GM12878 (cell line): ENCODE measurements at regions of chr14 and their contacts with region 1.

Region 1: GRCh38 chr14:23068476-23069412 is 11.4 kb upstream of the CDH24 start:
- DNase-seq: peak; percentile 67
- ATAC-seq: peak; percentile 91
- H3K4me3 ChIP-seq: no peak overlapping the region
- H3K27ac ChIP-seq: no peak overlapping the region
- H3K4me1 ChIP-seq: peaks cover 11% of the 10 kb centered on the region; the same call in 1 of the 2 replicates
- H3K27me3 ChIP-seq: no peaks in the 10 kb centered on the region
- CTCF ChIP-seq: peak; percentile 97 to 100 (median 99)
- EP300 ChIP-seq: no peak
- POLR2A ChIP-seq: no peak
- RAD21 ChIP-seq: peak; percentile 62

Region 2: DNA sequence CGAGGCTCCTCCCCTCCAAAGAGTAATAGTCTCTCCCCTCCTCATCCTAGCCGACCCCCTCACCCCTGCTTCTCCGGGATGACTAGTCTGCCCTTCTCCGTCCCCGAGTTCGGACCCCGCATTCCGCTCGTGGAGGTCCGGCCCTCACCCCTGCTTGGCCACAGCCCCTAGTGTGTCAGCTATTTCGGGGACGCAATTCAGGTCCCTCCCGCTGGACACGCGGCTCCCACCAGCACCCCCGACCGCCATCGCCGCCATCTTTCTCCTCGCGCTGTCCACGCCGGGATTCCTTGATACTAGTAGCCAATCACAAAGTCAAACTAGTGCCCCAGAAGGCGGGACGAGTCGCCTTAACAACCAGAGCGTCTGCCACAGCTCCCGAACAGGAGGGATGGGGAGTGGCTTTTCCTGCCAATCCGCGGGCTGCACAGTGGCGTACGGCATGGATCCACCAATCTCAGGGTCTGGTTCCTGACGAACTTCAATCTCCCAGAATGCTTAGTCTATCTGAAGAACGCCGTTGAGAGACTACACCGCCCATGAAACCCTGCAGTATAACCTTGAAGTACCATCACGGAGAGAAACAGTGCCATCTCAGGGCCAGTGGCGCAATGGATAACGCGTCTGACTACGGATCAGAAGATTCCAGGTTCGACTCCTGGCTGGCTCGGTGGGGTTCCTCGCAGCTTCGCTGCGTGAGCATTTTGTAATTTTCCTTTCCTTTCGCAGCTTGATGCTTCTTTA is 139.5 kb before region 1 on chr14 and contains the start of gene PRMT5:
- CTCF ChIA-PET with region 1: interaction called, 12 read pairs
- POLR2A ChIA-PET with region 1: interaction called, 5 read pairs
- RAD21 ChIA-PET with region 1: interaction called, 5 read pairs
- SMC1A ChIA-PET with region 1: interaction called, 5 read pairs
- in situ Hi-C with region 1: no loop called
- intact Hi-C with region 1: no loop called
- DNase-seq: peak; percentile 100
- ATAC-seq: peak; percentile 97
- H3K4me3 ChIP-seq: peak within 1 kb of the TSS; percentile 91
- H3K27ac ChIP-seq: peak within 1 kb of the TSS; percentile 81
- H3K4me1 ChIP-seq: peaks cover 16% of the 10 kb centered on the region; the same call in 1 of the 2 replicates
- H3K27me3 ChIP-seq: no peaks in the 10 kb centered on the region
- CTCF ChIP-seq: peak in 1 of 3 experiments; percentile 7; a peak in 1 of 6 replicates
- EP300 ChIP-seq: no peak
- POLR2A ChIP-seq: peak; percentile 97
- RAD21 ChIP-seq: no peak
- polyA plus RNA-seq, gene PRMT5: 54.3 to 71.6 TPM

Region 3: DNA sequence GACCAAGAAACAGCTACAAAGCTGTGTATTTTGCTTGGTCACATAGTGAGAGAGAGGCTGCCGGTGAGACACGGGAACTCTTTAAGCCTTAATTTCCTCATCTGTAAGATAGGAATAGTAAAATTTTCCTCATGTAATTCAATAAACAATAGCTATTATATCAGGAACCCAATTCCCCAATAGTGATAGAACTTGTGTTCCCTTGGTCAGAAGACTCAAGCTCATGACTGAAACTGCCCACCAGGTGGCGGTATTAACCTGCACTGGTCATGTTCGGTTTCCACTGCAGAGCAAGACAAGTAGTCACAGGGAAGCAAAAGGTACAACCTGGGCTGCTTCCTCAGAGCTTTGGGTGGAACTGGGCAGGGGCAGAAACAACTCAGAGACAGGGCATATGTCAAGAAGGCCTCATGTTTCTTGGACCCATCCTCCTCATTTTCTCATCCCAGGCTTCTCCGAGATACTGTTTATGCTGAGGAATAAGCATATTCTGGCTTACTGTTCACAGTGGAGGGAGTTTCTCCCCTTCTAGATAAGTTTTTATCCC is 82.2 kb before region 1 on chr14:
- CTCF ChIA-PET with region 1: interaction called, 73 read pairs
- POLR2A ChIA-PET with region 1: no interaction called
- RAD21 ChIA-PET with region 1: interaction called, 27 read pairs
- SMC1A ChIA-PET with region 1: interaction called, 23 read pairs
- in situ Hi-C with region 1: no loop called
- intact Hi-C with region 1: no loop called
- DNase-seq: no peak
- ATAC-seq: peak; percentile 90
- H3K4me3 ChIP-seq: no peak overlapping the region
- H3K27ac ChIP-seq: no peak overlapping the region
- H3K4me1 ChIP-seq: no peaks in the 10 kb centered on the region; the same call in 1 of the 2 replicates
- H3K27me3 ChIP-seq: peaks cover 3% of the 10 kb centered on the region in 2 experiments
- CTCF ChIP-seq: peak; percentile 85 to 94 (median 93)
- EP300 ChIP-seq: no peak
- POLR2A ChIP-seq: no peak
- RAD21 ChIP-seq: peak; percentile 95

Region 4: DNA sequence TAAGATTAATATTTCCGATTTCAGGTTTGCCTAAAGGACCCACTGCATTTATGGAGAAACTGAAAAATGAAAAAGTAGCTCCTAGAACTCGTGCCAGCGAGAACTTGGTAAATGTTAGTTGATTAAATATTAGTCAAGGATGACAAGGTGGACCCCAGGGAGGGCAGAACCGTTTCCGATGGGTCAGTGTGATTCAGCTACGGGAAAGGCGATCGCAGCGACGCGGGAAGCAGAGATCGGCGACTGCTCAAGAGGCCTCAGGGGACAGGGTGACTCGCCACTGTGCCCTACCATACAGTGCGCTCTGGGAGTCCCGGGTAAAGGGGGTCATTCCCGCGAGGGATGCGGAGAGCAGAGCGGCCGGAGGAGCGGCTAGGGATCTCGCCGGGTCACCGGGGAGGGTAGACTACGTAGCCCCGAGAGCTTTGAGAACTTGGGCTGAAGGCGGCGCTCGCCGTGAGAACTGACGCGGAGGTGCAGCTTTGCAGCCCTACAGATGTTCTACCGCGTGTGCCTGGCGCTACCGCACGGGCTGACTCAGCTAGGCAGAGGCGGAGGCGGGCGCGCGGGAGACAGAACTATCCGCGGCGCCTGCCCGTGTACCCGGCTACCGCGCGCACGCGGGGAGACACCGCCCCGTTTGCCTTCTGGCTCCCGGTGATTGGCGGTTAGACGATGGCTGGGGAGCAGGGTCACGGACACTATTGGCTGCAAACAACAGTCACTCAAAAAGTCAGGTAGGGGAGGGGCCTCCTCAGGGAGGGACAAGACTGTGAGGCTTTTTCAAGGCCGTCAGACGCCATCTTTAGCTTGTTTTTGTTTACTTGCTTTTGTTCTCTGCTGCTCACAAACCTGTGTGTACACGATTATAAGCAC is 62.0 kb before region 1 on chr14:
- CTCF ChIA-PET with region 1: interaction called, 24 read pairs
- POLR2A ChIA-PET with region 1: interaction called, 6 read pairs
- RAD21 ChIA-PET with region 1: interaction called, 4 read pairs
- SMC1A ChIA-PET with region 1: interaction called, 14 read pairs
- in situ Hi-C with region 1: no loop called
- intact Hi-C with region 1: no loop called
- DNase-seq: peak; percentile 96
- ATAC-seq: peak; percentile 98
- H3K4me3 ChIP-seq: peak overlapping the region; percentile 71
- H3K27ac ChIP-seq: peak overlapping the region; percentile 91
- H3K4me1 ChIP-seq: peaks cover 21% of the 10 kb centered on the region
- H3K27me3 ChIP-seq: no peaks in the 10 kb centered on the region
- CTCF ChIP-seq: peak in 2 of 3 experiments; percentile 26 to 30; a peak in 3 of 6 replicates
- EP300 ChIP-seq: no peak
- POLR2A ChIP-seq: peak; percentile 99
- RAD21 ChIP-seq: no peak

Region 5: GRCh38 chr14:23057757-23058653 is 10.7 kb before region 1 on chr14:
- CTCF ChIA-PET with region 1: interaction called, 54 read pairs
- POLR2A ChIA-PET with region 1: interaction called, 4 read pairs
- RAD21 ChIA-PET with region 1: interaction called, 4 read pairs
- SMC1A ChIA-PET with region 1: interaction called, 10 read pairs
- in situ Hi-C with region 1: no loop called
- intact Hi-C with region 1: no loop called
- DNase-seq: peak; percentile 40
- ATAC-seq: peak; percentile 82
- H3K4me3 ChIP-seq: peak overlapping the region; percentile 79
- H3K27ac ChIP-seq: no peak overlapping the region
- H3K4me1 ChIP-seq: peaks cover 12% of the 10 kb centered on the region
- H3K27me3 ChIP-seq: no peaks in the 10 kb centered on the region
- CTCF ChIP-seq: peak; percentile 92 to 97 (median 96); a peak in 5 of 6 replicates
- EP300 ChIP-seq: no peak
- POLR2A ChIP-seq: peak; percentile 74
- RAD21 ChIP-seq: peak; percentile 78

Region 6: DNA sequence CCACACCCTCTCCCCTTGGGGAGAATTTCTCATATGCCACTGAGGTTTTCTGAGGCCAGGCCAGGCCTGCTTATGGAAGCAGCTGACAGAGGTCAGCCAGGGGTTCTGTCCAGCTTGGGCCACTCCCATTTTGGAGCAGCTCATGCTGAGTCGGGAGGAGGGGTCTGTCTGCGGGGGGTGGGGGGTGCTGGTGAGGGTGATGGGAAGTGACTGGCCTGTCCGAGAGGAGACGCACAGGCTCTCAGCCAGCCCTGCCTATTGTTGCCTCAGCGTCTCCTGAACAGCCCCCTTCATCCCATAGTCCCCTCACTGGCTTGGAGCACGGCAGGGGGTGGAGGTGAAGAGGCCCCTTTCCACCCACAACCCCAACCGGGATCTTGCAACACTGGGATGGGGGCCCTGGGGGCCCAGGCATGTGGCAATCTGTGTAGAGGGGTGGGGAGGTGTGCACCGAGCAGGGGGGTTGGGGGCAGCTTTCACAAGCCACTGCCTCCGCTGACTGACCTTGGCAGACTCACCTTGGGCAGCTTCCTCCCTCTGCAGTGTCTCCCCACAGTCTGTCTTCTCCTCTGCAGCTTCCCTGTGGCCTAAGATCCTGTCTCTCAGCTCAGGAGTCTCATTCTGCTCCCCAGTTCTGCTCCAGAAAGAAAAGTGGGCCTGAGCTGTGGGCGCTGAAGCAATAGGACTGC is 44.8 kb after region 1 on chr14:
- CTCF ChIA-PET with region 1: interaction called, 30 read pairs
- POLR2A ChIA-PET with region 1: no interaction called
- RAD21 ChIA-PET with region 1: interaction called, 7 read pairs
- SMC1A ChIA-PET with region 1: interaction called, 5 read pairs
- in situ Hi-C with region 1: no loop called
- intact Hi-C with region 1: no loop called
- DNase-seq: no peak
- ATAC-seq: no peak
- H3K4me3 ChIP-seq: no peak overlapping the region
- H3K27ac ChIP-seq: no peak overlapping the region
- H3K4me1 ChIP-seq: no peaks in the 10 kb centered on the region
- H3K27me3 ChIP-seq: peaks cover 0 to 7% of the 10 kb centered on the region in 2 experiments; a peak in 3 of 4 replicates
- CTCF ChIP-seq: no peak
- EP300 ChIP-seq: no peak
- POLR2A ChIP-seq: no peak
- RAD21 ChIP-seq: no peak

Region 7: GRCh38 chr14:23320774-23321571 is 252.2 kb after region 1 on chr14 and contains the start of gene PABPN1:
- CTCF ChIA-PET with region 1: interaction called, 15 read pairs
- POLR2A ChIA-PET with region 1: interaction called, 3 read pairs
- RAD21 ChIA-PET with region 1: no interaction called
- SMC1A ChIA-PET with region 1: interaction called, 5 read pairs
- in situ Hi-C with region 1: no loop called
- intact Hi-C with region 1: no loop called
- DNase-seq: peak; percentile 99
- ATAC-seq: peak; percentile 95
- H3K4me3 ChIP-seq: peak within 1 kb of the TSS; percentile 99
- H3K27ac ChIP-seq: peak within 1 kb of the TSS; percentile 87
- H3K4me1 ChIP-seq: peaks cover 13% of the 10 kb centered on the region
- H3K27me3 ChIP-seq: no peaks in the 10 kb centered on the region
- CTCF ChIP-seq: no peak
- EP300 ChIP-seq: peak in 1 of 2 experiments; percentile 58; a peak in 1 of 4 replicates
- POLR2A ChIP-seq: peak; percentile 86
- RAD21 ChIP-seq: no peak
- polyA plus RNA-seq, gene PABPN1: 31.3 to 35.6 TPM